ENCODE measurements at regions of chr12 and their contacts with region 1.

Region 1: DNA sequence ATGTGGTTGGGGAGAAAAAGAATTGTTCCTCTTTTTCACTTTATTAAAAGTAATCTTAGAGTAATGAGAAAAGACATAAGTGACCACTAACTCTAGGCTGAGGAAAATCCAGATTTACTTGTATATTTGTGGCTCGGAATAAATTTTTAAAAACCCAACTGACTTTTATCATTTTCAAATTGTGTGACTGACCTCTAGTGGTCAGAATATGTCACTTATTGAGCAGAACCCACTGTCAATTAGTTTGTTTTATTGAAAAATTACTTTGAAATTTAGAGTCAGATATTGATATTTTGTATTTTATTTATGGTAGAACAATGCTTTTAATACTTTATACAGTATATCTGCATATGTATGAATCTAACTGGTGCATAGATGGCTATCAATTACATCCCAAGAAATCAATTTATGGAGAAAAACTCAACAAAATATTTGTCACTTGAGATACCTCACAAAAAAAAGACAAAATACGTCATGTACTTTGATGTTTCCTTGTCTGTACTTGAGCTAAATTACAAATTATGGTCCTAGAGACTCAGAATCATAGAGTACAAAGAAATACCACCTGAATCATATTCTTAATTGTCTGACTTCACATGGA is 229.4 kb downstream of the CNTN1 start:
- DNase-seq: no peak
- H3K4me3 ChIP-seq: no peak overlapping the region
- H3K27ac ChIP-seq: no peak overlapping the region
- H3K4me1 ChIP-seq: no peaks in the 10 kb centered on the region
- H3K27me3 ChIP-seq: no peaks in the 10 kb centered on the region
- CTCF ChIP-seq: peak; percentile 41 to 78 (median 70)
- POLR2A ChIP-seq: no peak

Region 2: GRCh38 chr12:40336573-40337199 is 585.0 kb before region 1 on chr12:
- intact Hi-C with region 1: loop called (anchors 10 kb)
- DNase-seq: no peak
- H3K4me3 ChIP-seq: no peak overlapping the region
- H3K27ac ChIP-seq: no peak overlapping the region
- H3K4me1 ChIP-seq: no peaks in the 10 kb centered on the region
- H3K27me3 ChIP-seq: no peaks in the 10 kb centered on the region
- CTCF ChIP-seq: peak in 3 of 4 experiments; percentile 15 to 29 (median 25)
- POLR2A ChIP-seq: no peak

Region 3: GRCh38 chr12:40622246-40622838 is 299.3 kb before region 1 on chr12:
- intact Hi-C with region 1: loop called (anchors 1 kb)
- DNase-seq: peak; percentile 55
- H3K4me3 ChIP-seq: no peak overlapping the region
- H3K27ac ChIP-seq: no peak overlapping the region
- H3K4me1 ChIP-seq: no peaks in the 10 kb centered on the region
- H3K27me3 ChIP-seq: no peaks in the 10 kb centered on the region
- CTCF ChIP-seq: peak; percentile 62 to 90 (median 70)
- POLR2A ChIP-seq: no peak

Region 4: DNA sequence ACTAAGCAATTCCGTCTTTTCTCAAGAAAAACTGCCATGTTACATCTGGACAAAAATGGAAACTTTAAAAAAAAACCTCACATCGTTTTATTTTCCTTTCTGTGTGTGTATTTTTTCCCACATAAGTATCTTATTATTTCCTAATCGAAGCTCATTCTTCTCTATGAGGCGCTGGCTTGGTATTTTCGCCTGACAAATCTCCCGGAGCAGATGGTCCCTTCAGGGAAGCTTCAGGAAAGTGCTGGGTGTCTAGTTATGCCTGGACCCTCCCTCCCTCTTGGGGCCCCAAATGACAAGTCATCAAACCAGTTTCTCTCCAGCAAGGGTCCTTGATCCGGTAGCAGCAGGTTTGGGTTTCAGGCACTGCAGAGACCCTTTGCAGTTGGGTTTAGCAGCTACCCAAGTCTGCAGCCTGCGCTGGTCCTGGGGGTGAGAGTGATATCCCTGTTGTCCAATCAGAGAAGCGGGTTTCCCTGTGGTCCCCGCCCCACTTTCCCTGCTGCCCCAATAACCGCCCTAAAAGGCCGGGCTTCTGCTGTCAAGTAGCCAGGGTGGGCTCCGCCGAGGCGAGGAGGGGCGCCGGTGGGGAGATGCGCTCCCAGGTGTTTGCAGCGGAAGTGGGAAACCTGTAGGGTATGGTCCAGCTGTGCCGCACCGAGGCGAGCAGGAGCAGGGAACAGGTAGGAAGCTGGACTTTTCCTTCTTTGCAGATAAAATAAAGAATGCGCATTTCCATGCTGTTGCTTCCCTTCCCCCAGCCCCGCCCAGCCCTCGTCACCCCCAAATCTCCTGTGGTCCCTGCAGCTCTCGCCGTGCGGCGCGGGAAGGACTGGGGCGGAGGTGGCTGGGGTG is 229.5 kb before region 1 on chr12 and contains the start of gene CNTN1:
- intact Hi-C with region 1: no loop called
- DNase-seq: peak; percentile 46
- H3K4me3 ChIP-seq: peak within 1 kb of the TSS; percentile 42 to 48
- H3K27ac ChIP-seq: peak within 1 kb of the TSS; percentile 24 to 45
- H3K4me1 ChIP-seq: no peaks in the 10 kb centered on the region
- H3K27me3 ChIP-seq: no peaks in the 10 kb centered on the region
- CTCF ChIP-seq: no peak
- POLR2A ChIP-seq: no peak
- total RNA-seq, gene CNTN1: 16.3 to 33.6 TPM

Region 5: DNA sequence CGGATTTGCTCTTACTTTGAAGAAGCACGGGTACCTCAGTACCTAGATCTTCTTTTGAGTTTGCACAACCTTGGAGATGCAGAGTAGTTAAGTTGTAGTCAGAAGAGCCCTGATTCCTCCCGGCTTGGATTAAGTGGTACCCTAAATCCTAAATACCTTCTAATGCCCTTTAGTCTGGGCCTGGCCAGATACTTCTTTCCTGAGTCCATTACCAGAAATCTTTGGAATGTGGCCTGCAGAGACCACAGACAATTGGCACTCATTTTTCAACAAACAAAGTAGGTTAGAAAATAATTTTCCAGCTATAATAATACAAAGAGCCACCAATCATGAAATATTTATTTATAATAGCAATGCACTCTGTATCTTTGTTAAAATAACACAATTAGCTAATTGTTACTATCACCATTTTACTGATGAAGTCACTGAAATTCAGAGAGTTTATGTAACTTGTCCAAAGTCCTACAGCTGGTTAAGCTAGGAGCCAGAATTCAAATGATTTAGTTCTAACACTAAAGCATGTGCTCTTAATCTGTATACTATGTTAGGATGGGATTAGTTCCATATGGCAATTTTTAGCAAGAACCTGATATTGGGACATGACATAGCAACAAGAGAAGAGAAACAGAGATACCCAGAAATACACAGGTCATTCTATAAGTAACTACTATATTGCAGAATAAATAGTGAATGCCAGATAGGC is 134.4 kb after region 1 on chr12:
- intact Hi-C with region 1: no loop called
- DNase-seq: no peak
- H3K4me3 ChIP-seq: no peak overlapping the region
- H3K27ac ChIP-seq: no peak overlapping the region
- H3K4me1 ChIP-seq: peaks cover 5% of the 10 kb centered on the region
- H3K27me3 ChIP-seq: no peaks in the 10 kb centered on the region
- CTCF ChIP-seq: no peak
- POLR2A ChIP-seq: no peak

Region 6: GRCh38 chr12:41436076-41436475 is 514.4 kb after region 1 on chr12:
- intact Hi-C with region 1: no loop called
- DNase-seq: no peak
- H3K4me3 ChIP-seq: no peak overlapping the region
- H3K27ac ChIP-seq: no peak overlapping the region
- H3K4me1 ChIP-seq: no peaks in the 10 kb centered on the region
- H3K27me3 ChIP-seq: no peaks in the 10 kb centered on the region
- CTCF ChIP-seq: no peak
- POLR2A ChIP-seq: no peak

Measured in prostate gland (tissue), 2 donors.